ENCODE measurements at regions of chr1 and their contacts with region 1.

Region 1: DNA sequence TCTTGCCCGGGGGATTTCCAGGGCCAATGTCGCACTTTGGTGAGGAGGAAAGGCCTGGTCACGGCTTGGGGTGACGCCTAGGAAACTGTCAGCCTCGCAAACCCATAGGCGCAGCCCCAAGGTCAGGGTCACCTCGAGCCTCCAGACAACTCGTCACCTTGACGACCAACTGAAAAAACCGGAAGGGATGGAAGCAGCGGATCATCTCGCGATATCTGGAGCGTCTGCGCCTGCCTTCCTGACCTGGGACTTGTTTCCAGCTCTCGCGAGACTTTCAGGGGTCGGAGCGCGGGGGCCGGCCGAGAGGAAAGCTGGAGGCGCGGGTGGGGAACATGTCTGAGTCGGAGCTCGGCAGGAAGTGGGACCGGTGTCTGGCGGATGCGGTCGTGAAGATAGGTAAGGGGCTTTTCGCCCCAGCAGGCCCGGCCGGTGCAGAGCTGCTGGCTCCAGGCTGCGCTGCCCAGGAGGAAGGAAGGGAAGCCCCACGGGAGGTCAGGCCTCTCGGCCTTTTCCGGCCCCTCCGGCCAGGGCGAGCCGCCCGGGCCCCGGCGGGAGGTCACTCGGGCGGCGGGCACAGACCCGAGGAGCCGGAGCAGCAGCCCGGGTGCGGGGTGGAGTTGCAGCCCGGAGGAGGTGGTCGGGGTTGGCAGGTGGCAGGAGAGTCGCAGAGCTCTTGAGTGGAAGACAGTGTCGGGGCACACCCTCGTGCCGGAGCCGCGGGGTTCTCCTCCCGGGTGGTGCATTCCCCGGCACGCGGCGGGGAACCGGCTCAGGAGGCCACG is 47.2 kb upstream of the NBL1 start:
- DNase-seq: peak; percentile 97
- H3K4me3 Mint-ChIP-seq: peak overlapping the region; percentile 98
- H3K27ac Mint-ChIP-seq: peak overlapping the region; percentile 99
- H3K4me1 Mint-ChIP-seq: peaks cover 37% of the 10 kb centered on the region
- H3K27me3 Mint-ChIP-seq: peaks cover 3% of the 10 kb centered on the region

Region 2: DNA sequence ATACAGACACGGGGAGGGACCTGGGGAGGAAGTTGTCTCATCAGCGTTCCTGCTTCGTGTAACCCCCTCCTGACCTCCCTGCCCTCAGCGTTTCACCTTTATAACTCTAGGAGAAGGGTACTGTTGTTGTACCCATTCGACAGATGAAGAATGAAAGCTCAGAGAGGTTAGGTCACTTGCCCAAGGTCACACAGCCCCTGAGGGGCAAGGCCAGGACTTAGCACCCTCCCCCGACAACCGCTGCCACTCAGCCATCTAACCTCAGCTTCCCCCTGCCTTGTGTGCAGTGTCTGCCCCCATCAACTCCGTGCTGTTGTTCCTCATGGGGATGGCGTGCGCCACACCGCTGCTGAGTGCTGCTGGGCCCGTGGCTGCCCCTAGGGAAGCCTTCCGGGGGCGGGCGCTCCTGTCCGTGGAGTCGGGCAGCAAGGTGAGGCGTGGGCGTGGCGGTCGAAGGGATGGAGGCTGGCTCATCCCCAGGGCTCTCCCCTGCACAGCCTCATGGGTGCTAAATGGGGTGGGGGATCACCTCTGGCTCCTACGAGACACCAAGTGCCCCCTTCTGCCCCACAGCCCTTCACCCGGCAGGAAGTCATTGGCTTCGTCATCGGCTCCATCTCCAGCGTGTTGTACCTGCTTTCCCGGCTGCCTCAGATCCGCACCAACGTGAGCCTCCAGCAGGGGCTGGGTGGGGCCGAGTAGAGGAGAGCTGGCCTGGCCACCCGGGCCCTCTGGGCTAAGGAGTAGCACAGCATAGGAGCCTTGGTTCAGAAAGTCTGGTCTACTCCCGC is 270.8 kb before region 1 on chr1:
- intact Hi-C with region 1: no loop called
- DNase-seq: no peak
- H3K4me3 Mint-ChIP-seq: no peak overlapping the region
- H3K27ac Mint-ChIP-seq: no peak overlapping the region
- H3K4me1 Mint-ChIP-seq: no peaks in the 10 kb centered on the region
- H3K27me3 Mint-ChIP-seq: no peaks in the 10 kb centered on the region

Region 3: DNA sequence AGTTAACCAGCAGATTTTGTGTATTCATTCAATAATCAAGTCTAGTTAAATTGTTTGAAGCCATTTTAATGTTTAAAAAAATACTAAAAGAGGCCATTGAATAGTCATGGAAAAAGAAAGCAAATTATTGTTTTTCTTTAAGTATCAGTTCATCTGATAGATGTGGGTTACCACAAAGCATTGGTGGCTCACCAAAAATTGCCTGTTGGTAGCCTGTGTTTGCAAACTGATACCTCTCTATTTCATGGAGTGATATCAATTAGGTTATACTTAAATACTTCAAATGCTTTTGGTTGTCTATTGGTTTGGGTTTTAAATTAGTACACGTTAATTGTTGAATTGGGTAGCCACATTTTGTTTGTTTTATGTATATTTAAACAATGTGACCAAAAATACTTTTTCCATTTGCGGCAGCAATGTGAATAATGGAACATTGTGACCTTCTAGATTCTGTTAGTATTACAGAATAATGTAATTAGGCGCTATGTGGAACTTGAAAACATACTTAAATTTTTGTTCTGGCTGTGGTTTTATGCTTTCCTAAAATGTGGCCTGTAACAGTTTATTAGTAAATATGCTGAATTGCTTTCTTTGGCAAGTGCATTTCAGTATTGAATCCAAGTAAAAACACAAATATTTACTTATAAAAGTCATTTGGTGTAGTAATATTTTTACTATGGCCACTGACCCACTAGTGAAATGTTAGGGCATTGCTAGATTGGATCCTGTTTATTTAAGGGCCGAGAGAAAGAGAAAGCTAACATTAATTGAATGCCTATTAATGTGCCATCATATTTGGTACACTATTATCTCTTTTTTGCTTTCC is 10.1 kb after region 1 on chr1:
- intact Hi-C with region 1: loop called (anchors 1 kb)
- DNase-seq: peak; percentile 61
- H3K4me3 Mint-ChIP-seq: peak overlapping the region; percentile 18
- H3K27ac Mint-ChIP-seq: peak overlapping the region; percentile 82
- H3K4me1 Mint-ChIP-seq: peaks cover 40% of the 10 kb centered on the region
- H3K27me3 Mint-ChIP-seq: no peaks in the 10 kb centered on the region

Region 4: DNA sequence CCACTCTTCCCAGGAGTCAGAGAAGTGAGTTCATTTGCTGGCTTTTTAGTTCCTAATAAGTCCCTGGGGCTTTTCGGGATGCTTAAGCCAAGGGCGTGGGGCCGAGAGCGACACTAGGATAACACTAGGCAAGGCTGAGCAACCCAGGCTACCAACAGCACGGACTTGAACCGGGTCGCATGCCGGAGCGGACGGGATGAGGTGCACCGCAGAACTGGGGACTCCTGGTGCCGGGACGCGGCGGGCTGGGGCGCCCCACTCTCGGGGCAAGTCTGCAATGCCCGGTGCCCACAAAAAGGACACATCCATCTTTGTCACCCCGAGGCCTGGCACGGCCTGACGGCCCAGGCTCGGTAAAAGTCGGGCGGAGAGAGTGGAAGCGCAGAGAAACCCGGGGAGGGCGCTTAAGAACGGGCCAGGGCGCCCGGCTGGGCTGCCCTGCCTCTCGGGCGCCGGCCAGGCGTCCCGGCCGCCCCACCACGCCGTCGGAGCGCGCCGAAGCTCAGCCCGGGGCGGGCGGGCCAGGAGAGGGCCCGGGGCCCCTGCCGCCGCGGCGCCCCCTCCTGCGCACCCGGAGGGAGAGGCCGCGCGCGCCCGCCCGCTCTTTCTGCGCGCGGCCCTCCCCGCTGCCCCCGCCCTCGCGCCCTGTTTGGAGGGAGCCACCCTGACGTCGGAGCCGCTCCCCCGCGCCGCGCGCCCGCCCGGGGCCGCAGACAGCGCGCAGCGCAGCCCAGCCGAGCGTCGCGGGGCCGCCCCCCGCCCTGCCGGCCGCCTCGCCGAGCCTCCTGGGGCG is 46.9 kb after region 1 on chr1 and contains the start of gene NBL1:
- intact Hi-C with region 1: loop called (anchors 2 kb)
- DNase-seq: peak; percentile 71
- H3K4me3 Mint-ChIP-seq: peak within 1 kb of the TSS; percentile 98
- H3K27ac Mint-ChIP-seq: peak within 1 kb of the TSS; percentile 83
- H3K4me1 Mint-ChIP-seq: peaks cover 28% of the 10 kb centered on the region
- H3K27me3 Mint-ChIP-seq: peaks cover 17% of the 10 kb centered on the region
- total RNA-seq, gene NBL1: 51.6 and 55.7 TPM in 2 replicates

Region 5: GRCh38 chr1:19715334-19716203 is 118.7 kb after region 1 on chr1:
- intact Hi-C with region 1: loop called (anchors 10 kb)
- DNase-seq: peak; percentile 80
- H3K4me3 Mint-ChIP-seq: no peak overlapping the region
- H3K27ac Mint-ChIP-seq: no peak overlapping the region
- H3K4me1 Mint-ChIP-seq: peaks cover 17% of the 10 kb centered on the region
- H3K27me3 Mint-ChIP-seq: no peaks in the 10 kb centered on the region